Naive thymus-derived CD8-positive, alpha-beta T cell (primary cell): ENCODE measurements at regions of chr17 and their contacts with region 1.

Region 1: GRCh38 chr17:7435221-7435675 is at the start of gene TMEM102:
- DNase-seq: peak; percentile 94 to 99 (median 98)
- ATAC-seq: peak; percentile 74 to 82
- H3K4me3 Mint-ChIP-seq: peak within 1 kb of the TSS; percentile 90 to 98 (median 95)
- H3K27ac Mint-ChIP-seq: peak within 1 kb of the TSS; percentile 91 to 99 (median 98)
- H3K4me1 Mint-ChIP-seq: peaks cover 20 to 45% (median 37%) of the 10 kb centered on the region in 4 donors
- H3K27me3 Mint-ChIP-seq: peaks cover 3 to 18% (median 9%) of the 10 kb centered on the region in 5 donors
- polyA plus RNA-seq, gene TMEM102: 9.8 to 19.1 (median 12.1) TPM

Region 2: GRCh38 chr17:7261172-7261927 is 173.9 kb before region 1 on chr17:
- POLR2A ChIA-PET with region 1: no interaction called
- DNase-seq: peak in 8 of 10 donors; percentile 23 to 71 (median 44)
- ATAC-seq: peak; percentile 59 to 61
- H3K4me3 Mint-ChIP-seq: peak overlapping the region; percentile 73 to 86 (median 80)
- H3K27ac Mint-ChIP-seq: peak overlapping the region; percentile 59 to 93 (median 86)
- H3K4me1 Mint-ChIP-seq: peaks cover 19 to 33% (median 29%) of the 10 kb centered on the region in 4 donors
- H3K27me3 Mint-ChIP-seq: peaks cover 0 to 3% (median 0%) of the 10 kb centered on the region in 5 donors

Region 3: DNA sequence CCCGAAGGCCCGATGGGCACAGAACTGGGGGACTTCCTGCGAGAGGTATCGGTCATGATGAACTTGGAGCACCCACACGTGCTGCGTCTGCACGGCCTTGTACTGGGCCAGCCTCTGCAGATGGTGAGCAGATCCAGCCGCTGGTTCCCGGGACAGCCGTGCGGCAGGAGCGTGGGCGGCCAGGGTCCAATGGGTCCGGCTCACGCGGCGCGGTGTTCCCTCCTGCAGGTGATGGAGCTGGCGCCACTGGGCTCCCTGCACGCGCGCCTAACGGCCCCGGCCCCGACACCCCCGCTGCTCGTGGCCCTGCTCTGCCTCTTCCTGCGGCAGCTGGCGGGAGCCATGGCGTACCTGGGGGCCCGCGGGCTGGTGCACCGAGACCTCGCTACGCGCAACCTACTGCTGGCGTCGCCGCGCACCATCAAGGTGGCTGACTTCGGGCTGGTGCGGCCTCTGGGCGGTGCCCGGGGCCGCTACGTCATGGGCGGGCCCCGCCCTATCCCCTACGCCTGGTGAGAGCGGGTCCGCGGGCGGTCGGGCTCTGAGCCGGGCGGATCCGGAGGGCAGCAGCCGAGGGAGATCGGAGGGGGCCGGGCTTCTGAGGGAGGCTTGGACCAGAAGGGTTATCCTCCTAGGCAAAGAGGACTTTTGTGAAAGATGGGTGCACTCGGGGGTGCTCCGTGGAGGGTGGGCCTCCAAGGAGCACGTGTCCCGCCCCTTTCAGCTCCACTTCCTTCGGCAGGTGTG is 51.3 kb before region 1 on chr17:
- POLR2A ChIA-PET with region 1: interaction called, 36 read pairs
- DNase-seq: peak; percentile 65 to 93 (median 82)
- ATAC-seq: peak; percentile 95
- H3K4me3 Mint-ChIP-seq: peak overlapping the region; percentile 77 to 94 (median 86)
- H3K27ac Mint-ChIP-seq: peak overlapping the region; percentile 48 to 97 (median 96)
- H3K4me1 Mint-ChIP-seq: peaks cover 15 to 42% (median 24%) of the 10 kb centered on the region in 4 donors
- H3K27me3 Mint-ChIP-seq: peaks cover 14 to 33% (median 29%) of the 10 kb centered on the region in 5 donors

Region 4: DNA sequence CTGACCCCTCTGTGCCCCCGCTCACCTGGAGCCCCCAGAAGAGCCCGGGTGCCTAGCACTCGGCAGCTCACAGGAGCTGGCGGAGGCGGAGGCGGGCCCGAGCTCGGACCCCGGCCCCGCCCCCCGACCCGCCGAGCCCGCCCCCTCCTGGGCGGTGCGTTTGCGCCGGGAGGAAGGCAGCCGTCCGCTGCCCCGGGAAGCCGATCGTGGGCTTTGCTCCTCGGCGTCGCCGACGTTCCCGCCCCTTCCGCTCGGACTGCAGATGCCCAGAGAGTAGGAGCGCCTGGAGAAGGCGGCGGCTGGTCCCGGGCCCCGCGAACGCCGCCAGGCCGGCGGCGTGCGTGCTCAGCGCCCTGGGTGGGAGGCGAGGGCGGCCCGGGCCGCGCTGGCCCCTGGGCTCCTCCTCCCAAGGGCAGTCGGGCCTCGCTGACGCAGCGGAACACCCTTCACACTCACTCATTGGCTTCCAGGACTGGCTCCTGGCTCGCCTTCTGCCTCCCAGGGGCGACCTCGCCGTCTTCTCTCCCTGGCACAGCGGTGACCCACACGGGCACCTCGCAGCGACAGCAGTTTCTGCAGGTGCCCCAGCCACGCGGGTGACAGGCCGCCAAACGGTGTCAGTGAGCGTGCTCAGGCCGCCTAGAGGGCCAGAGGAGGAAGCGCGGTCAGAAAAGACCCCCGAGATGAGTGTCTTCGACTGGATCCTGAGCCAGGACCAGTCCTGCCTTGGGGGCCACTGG is 40.6 kb before region 1 on chr17 and contains the start of gene PLSCR3:
- POLR2A ChIA-PET with region 1: interaction called, 21 read pairs
- DNase-seq: peak; percentile 64 to 93 (median 84)
- ATAC-seq: peak; percentile 84 to 87
- H3K4me3 Mint-ChIP-seq: peak within 1 kb of the TSS; percentile 93 to 97 (median 94)
- H3K27ac Mint-ChIP-seq: peak within 1 kb of the TSS; percentile 85 to 97 (median 94)
- H3K4me1 Mint-ChIP-seq: peaks cover 18 to 46% (median 37%) of the 10 kb centered on the region in 4 donors
- H3K27me3 Mint-ChIP-seq: no peaks in the 10 kb centered on the region
- polyA plus RNA-seq, gene PLSCR3: 90.5 to 152 (median 125) TPM

Region 5: DNA sequence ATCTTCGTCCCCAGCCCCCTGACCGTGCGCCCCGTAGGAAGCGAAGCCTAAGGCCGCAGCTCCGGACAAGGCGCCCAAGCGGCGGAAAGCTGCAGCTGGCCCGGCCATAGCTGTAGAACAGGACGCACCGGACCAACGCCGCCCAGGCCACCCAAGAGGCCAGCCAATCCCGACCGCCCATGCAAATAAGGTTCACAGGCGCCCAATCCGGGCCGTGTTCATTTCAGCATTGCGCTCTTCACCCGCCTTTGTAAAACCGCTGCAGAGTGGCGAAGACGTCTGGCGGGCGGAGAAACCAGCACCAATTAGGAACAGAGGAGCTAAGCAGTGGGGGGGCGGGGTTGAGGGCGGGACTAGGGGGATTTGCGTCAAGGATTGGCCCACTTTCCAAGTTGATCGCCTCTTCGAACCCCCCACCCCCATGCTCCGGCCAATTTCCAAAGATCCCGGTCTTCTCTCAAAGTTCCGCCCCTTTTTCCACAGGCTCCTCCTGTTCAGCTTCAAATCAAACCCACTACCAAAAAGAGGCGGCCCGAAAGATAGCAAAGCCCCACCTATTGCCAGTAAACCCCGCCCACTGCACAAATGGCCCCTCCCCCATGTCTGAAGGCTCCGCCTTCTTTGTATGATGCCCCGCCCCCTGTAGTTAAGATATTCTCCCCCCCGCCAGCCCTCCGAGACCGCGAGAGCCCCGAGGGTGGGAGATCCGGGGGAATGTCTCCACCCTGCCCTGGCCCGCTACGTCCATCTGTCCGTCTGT is 31.1 kb before region 1 on chr17 and contains the start of gene TMEM256:
- POLR2A ChIA-PET with region 1: interaction called, 23 read pairs
- DNase-seq: peak; percentile 89 to 97 (median 93)
- ATAC-seq: peak; percentile 87 to 91
- H3K4me3 Mint-ChIP-seq: peak within 1 kb of the TSS; percentile 92 to 98 (median 96)
- H3K27ac Mint-ChIP-seq: peak within 1 kb of the TSS; percentile 89 to 99 (median 98)
- H3K4me1 Mint-ChIP-seq: peaks cover 15 to 35% (median 28%) of the 10 kb centered on the region in 4 donors
- H3K27me3 Mint-ChIP-seq: peaks cover 0 to 4% (median 0%) of the 10 kb centered on the region in 5 donors
- polyA plus RNA-seq, gene TMEM256: 62.6 to 96.5 (median 81.4) TPM

Region 6: GRCh38 chr17:7454980-7455379 is 19.7 kb after region 1 on chr17:
- POLR2A ChIA-PET with region 1: interaction called, 133 read pairs
- DNase-seq: no peak
- ATAC-seq: peak in 1 of 2 donors; percentile 55
- H3K4me3 Mint-ChIP-seq: peak overlapping the region; percentile 87 to 99 (median 96)
- H3K27ac Mint-ChIP-seq: peak overlapping the region; percentile 86 to 98 (median 92)
- H3K4me1 Mint-ChIP-seq: peaks cover 19 to 45% (median 23%) of the 10 kb centered on the region in 4 donors
- H3K27me3 Mint-ChIP-seq: no peaks in the 10 kb centered on the region

Region 7: GRCh38 chr17:7650509-7651096 is 215.4 kb after region 1 on chr17 and contains the start of gene ATP1B2:
- POLR2A ChIA-PET with region 1: no interaction called
- DNase-seq: peak; percentile 57 to 91 (median 74)
- ATAC-seq: peak; percentile 90 to 91
- H3K4me3 Mint-ChIP-seq: peak within 1 kb of the TSS; percentile 80 to 98 (median 90)
- H3K27ac Mint-ChIP-seq: peak within 1 kb of the TSS in 9 of 10 donors; percentile 4 to 84 (median 72)
- H3K4me1 Mint-ChIP-seq: peaks cover 16 to 22% (median 19%) of the 10 kb centered on the region in 4 donors
- H3K27me3 Mint-ChIP-seq: peaks cover 3 to 27% (median 8%) of the 10 kb centered on the region in 5 donors
- polyA plus RNA-seq, gene ATP1B2: 0.17 to 0.57 TPM in 2 of 3 donors, not detected in the other